ENCODE measurements at regions of chr2 and their contacts with region 1.

Region 1: GRCh38 chr2:224894356-224894755 is 147.9 kb downstream of the DOCK10 start:
- DNase-seq: no peak
- H3K4me3 Mint-ChIP-seq: peak overlapping the region; percentile 43
- H3K27ac Mint-ChIP-seq: peak overlapping the region; percentile 70
- H3K4me1 Mint-ChIP-seq: peaks cover 49% of the 10 kb centered on the region
- H3K27me3 Mint-ChIP-seq: no peaks in the 10 kb centered on the region

Region 2: DNA sequence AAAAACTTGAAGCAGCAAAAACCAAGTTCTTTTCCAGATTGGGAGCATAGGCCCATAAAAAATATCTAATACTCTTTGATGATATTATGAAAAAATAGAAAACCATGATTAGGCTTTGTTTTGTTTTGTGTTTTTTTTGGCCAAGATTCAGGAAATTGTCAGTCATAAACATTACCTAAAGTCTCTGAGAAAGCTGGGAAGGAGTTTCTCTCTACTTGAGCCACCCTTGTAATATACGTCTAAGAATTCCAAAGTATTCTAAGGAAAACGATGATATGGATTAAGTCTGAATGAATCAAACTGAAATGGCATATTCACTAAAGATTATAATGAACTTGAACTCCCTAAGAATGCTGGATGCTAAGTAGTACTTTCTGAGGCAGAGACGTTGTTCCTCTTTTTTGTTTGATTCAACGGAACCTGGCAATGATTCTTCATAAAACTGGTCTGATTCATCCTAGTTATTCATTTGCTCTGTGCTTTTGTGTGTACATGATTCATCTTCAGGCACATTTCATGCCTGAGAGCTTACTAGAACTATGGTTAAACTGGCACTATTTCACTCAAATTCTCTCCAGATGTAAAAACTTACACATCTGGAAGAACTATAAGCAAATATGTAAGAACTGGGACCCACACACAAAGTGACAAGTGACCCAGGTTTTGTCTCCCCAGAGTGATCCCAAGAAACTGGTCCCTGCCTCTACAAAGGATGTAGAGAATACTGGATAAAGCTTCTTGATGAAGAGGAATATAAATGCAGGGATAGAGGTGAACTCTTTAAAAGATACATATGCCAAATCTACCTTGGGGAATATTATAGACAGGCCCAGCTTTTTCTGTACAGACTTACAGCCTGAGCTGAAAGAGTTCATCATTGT is 11.8 kb before region 1 on chr2:
- intact Hi-C with region 1: no loop called
- DNase-seq: no peak
- H3K4me3 Mint-ChIP-seq: no peak overlapping the region
- H3K27ac Mint-ChIP-seq: no peak overlapping the region
- H3K4me1 Mint-ChIP-seq: peaks cover 35% of the 10 kb centered on the region
- H3K27me3 Mint-ChIP-seq: no peaks in the 10 kb centered on the region

Region 3: DNA sequence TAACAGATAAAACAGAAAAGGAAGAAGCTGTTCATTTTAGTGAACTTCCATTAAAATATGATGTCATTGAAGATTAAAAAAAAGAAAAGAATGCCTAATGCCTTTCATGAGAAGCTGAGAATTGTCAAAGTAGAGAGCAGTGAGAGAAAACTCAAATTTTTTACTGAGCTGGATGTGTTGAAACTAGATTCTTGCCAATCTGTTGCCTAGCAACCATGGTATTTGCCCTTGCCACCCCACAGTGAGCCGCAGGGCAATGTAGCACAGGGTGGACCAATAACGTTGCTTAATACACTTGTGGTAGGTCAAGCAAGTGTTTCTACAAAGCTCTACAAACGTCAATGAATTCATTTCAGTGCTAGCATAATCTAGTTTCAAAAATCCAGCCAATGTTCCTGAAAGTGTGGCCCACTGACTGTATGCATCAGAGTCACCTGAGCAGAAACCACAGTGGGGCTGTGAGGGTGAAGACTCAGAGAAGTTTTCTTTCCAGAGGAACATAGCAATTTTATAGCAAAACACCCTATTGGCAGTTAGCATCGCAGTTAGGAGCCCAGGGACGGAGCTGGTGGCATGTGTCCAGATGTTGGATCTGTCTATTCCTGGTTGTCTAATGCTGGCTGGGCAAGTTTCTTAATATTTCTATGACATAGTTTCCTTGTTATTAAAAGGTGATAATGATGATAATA is 15.7 kb after region 1 on chr2:
- intact Hi-C with region 1: loop called (anchors 2 kb)
- DNase-seq: no peak
- H3K4me3 Mint-ChIP-seq: no peak overlapping the region
- H3K27ac Mint-ChIP-seq: peak overlapping the region; percentile 81
- H3K4me1 Mint-ChIP-seq: peaks cover 42% of the 10 kb centered on the region
- H3K27me3 Mint-ChIP-seq: no peaks in the 10 kb centered on the region

Region 4: GRCh38 chr2:224922142-224922727 is 27.9 kb after region 1 on chr2:
- intact Hi-C with region 1: loop called (anchors 2 kb)
- DNase-seq: no peak
- H3K4me3 Mint-ChIP-seq: no peak overlapping the region
- H3K27ac Mint-ChIP-seq: peak overlapping the region; percentile 62
- H3K4me1 Mint-ChIP-seq: peaks cover 50% of the 10 kb centered on the region
- H3K27me3 Mint-ChIP-seq: no peaks in the 10 kb centered on the region